ENCODE measurements at regions of chr15 and their contacts with region 1.

Region 1: DNA sequence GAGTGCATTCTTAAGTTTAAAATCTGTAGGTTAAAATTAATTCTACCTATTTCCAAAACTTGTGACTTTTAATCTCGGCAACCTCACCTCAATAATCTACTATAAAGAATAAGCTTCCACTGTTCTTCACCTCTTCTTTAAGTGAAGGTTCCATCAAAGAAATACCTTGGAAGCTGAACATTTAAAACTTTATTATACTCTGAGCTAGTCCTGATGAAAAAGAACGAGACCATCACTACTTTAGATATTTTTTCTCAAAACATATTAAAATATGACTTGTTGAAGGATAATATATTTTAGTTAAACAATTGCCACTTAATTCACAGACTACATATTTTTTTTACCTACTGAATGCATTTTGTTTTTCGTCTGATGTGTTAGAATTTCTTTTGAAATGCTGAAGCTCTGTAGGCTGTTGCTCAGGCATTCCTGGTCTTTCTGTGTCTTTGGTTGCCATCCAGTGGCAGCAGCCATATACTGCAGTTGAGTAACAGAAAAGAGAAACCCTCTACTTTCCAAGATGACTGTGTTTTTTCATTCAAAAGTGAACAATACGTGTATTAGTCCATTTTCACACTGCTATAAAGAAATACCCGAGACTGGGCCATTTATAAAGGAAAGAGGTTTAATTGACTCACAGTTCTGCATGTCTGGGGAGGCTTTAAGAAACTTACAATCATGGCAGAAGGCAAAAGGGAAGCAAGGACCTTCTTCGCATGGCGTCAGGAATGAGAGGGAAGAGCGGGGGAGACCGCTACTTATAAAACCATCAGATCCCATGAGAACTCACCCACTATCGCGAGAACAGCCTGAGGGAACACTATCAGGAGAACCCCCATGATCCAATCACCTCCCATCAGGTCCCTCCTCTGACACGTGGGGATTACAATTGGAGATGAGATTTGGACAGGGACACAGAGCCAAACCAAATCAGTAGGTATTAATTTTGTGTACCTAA is 4.5 kb upstream of the GOLGA8B start:
- DNase-seq: peak; percentile 67
- H3K4me3 ChIP-seq: no peak overlapping the region
- H3K27ac ChIP-seq: no peak overlapping the region
- H3K4me1 ChIP-seq: peaks cover 5% of the 10 kb centered on the region
- CTCF ChIP-seq: peak; percentile 93

Region 2: GRCh38 chr15:34056936-34057335 is 531.1 kb before region 1 on chr15:
- CTCF ChIA-PET with region 1: no interaction called
- POLR2A ChIA-PET with region 1: no interaction called
- intact Hi-C with region 1: loop called (anchors 1 kb)
- DNase-seq: no peak
- H3K4me3 ChIP-seq: no peak overlapping the region
- H3K27ac ChIP-seq: no peak overlapping the region
- H3K4me1 ChIP-seq: no peaks in the 10 kb centered on the region
- CTCF ChIP-seq: no peak

Region 3: GRCh38 chr15:34109797-34110663 is 478.0 kb before region 1 on chr15:
- CTCF ChIA-PET with region 1: interaction called, 3 read pairs
- POLR2A ChIA-PET with region 1: no interaction called
- intact Hi-C with region 1: loop called (anchors 1 kb)
- DNase-seq: peak; percentile 49
- H3K4me3 ChIP-seq: no peak overlapping the region
- H3K27ac ChIP-seq: no peak overlapping the region
- H3K4me1 ChIP-seq: no peaks in the 10 kb centered on the region
- CTCF ChIP-seq: peak; percentile 92

Region 4: DNA sequence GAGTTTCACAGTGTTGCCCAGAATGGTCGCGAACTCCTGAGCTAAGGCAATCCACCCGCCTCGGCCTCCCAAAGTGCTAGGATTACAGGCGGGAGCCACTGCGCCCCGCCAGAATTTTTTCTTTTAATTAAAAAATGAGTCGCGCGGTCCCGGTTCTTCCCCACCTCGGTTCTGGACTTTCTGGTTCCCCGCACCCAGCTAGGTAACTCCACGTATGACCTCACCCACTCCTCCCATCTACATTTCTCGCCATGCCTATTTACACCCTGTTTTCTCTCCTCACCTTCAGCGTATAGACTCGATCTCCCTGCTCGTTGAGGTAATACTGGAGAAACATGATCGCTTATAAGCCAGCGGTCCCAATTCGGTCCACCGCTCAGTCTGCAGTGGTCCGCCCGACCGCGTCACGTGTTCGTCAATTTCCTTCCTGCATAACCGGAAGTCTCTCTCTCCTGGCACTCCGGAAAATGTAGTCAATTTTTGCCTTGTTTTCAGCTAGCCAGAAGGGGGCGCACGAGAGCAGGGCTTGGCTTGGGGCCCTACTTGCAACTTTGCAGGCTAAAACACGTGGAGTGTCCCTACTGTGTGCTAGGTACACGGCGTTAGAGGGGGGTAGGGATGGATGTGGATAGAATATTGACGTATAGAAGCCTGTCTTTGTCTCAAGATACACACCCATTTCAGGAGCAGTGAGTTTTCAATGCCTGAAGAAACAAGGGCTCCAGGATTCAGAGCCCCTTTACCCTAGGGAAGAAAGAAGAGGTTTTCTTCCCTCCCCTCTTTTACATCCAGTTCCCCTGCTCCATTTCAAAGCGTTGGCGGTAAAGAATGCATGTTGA is 245.0 kb before region 1 on chr15 and contains the starts of genes NOP10 and NUTM1:
- CTCF ChIA-PET with region 1: no interaction called
- POLR2A ChIA-PET with region 1: interaction called, 4 read pairs
- intact Hi-C with region 1: loop called (anchors 2 kb)
- DNase-seq: peak; percentile 94
- H3K4me3 ChIP-seq: peak within 1 kb of the TSS; percentile 91
- H3K27ac ChIP-seq: peak within 1 kb of the TSS; percentile 78
- H3K4me1 ChIP-seq: peaks cover 12% of the 10 kb centered on the region
- CTCF ChIP-seq: peak; percentile 87
- total RNA-seq, gene NOP10: 115 and 191 TPM in 2 replicates
- total RNA-seq, gene NUTM1: not detected in 2 replicates

Region 5: GRCh38 chr15:34520566-34520965 is 67.4 kb before region 1 on chr15:
- CTCF ChIA-PET with region 1: no interaction called
- POLR2A ChIA-PET with region 1: interaction called, 4 read pairs
- intact Hi-C with region 1: loop called (anchors 10 kb)
- DNase-seq: no peak
- H3K4me3 ChIP-seq: no peak overlapping the region
- H3K27ac ChIP-seq: no peak overlapping the region
- H3K4me1 ChIP-seq: no peaks in the 10 kb centered on the region
- CTCF ChIP-seq: no peak

Region 6: DNA sequence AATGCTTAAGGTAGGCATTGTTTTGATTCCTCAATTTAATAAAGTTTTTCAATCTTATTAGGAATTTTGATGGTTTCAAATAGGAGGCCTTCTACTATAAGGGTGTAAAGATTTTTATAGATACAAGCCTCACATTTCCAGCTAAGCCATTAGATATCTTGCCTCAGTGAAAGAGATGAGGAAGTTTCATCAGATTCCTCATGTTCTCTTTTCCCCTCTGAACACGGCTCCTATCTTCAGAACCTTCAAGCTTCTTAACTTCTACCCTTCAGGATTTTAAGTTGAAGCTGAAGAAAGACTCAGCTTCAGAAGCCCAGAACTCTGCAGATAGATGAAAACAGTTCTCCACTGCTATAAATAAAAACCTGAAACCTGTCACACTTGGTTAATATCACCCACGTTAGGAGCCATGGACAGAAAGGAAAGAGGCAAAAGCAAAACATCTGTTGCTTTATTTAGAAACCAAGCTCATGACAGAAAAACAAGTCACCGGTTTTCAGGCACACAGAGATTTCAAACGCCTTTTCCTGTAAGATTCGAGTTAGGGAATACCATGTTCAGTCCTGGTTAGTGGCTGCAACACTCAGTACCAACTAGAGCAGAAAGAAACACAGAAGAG is 77.6 kb after region 1 on chr15:
- CTCF ChIA-PET with region 1: no interaction called
- POLR2A ChIA-PET with region 1: no interaction called
- intact Hi-C with region 1: no loop called
- DNase-seq: no peak
- H3K4me3 ChIP-seq: no peak overlapping the region
- H3K27ac ChIP-seq: no peak overlapping the region
- H3K4me1 ChIP-seq: no peaks in the 10 kb centered on the region
- CTCF ChIP-seq: no peak

Measured in OCI-LY7 (cell line).